B cell (primary cell): ENCODE measurements at regions of chr1 and their contacts with region 1.

Region 1: DNA sequence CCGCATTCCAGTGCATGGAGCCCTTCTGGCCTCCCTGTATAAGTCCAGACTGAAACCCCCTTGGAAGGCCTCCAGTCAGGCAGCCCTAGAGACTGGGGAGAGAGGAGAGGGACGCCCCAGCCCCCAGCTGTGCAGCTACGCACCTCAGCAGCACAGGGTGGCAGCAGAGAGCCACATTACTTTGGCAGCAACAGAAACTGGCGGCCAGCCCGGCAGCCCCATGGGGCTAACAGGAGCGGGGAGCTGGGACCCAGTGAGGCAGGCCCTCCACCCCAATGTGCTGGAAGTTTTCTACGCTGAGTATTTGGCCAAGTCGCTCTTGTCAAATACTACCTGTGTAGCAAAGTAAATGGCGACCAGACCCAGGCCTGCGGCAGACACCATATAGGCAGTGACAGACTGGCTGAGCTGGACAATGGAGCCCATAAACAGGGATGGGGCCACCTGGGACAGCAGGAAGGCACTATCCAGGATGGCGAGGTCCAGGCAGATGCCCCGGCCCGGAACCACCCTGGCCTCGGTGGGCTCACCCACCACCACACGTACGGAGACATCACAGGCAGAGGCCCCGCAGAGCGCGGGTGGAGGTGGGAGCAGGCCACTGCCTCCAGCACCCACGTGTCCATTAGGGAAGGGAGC is 21.2 kb downstream of the SLC45A3 start:
- DNase-seq: peak; percentile 87
- ATAC-seq: peak; percentile 93
- H3K4me3 ChIP-seq: no peak overlapping the region
- H3K4me3 Mint-ChIP-seq: peak overlapping the region; percentile 10
- H3K27ac ChIP-seq: peak overlapping the region in 1 of 2 donors; percentile 72
- H3K27ac Mint-ChIP-seq: peak overlapping the region; percentile 32
- H3K4me1 ChIP-seq: peaks cover 18 to 25% of the 10 kb centered on the region in 2 donors
- H3K4me1 Mint-ChIP-seq: peaks cover 22% of the 10 kb centered on the region
- H3K27me3 ChIP-seq: no peaks in the 10 kb centered on the region
- H3K27me3 Mint-ChIP-seq: no peaks in the 10 kb centered on the region
- CTCF ChIP-seq: peak; percentile 89

Region 2: DNA sequence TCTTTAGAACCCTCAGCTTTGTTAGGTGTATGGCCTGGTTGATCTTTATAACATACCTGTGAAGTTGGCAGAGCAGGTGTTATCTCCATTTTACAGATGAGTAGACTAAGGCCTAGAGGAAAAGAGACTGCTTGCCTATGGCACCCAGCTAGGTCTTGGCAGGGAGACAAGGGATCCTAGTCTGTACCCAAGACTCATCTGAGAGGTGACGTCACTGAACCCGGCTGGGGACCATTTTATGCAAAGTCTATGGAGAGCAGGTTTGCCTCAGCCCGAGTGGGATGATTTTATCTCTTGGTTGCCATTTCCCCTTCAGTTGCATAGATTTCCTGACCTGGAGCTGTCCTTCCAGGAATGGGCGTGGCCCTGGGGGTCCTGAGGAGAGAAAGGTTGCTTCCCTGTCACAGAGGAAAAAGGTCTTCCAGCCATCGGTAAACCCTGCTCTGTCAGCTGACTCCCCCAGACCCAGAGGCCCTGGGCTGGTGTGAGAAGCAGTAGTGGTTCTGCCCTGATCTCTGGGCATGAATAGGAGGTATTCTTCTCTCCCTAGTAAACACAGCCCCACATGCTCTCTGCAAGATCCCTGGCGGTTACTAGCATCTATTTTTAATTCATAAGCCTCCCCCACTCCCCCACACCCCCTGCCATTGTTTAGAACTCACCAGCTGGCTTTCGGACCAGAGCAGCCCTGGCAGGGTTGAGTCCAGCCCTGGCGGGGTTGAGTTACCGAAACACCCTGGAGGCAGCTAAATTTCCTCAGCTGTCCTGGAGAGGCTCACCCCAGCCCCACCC is 411.7 kb before region 1 on chr1:
- CTCF ChIA-PET with region 1: interaction called, 10 read pairs
- POLR2A ChIA-PET with region 1: no interaction called
- intact Hi-C with region 1: no loop called
- DNase-seq: no peak
- ATAC-seq: no peak
- H3K4me3 ChIP-seq: no peak overlapping the region
- H3K4me3 Mint-ChIP-seq: no peak overlapping the region
- H3K27ac ChIP-seq: no peak overlapping the region
- H3K27ac Mint-ChIP-seq: no peak overlapping the region
- H3K4me1 ChIP-seq: no peaks in the 10 kb centered on the region
- H3K4me1 Mint-ChIP-seq: no peaks in the 10 kb centered on the region
- H3K27me3 ChIP-seq: no peaks in the 10 kb centered on the region
- H3K27me3 Mint-ChIP-seq: no peaks in the 10 kb centered on the region
- CTCF ChIP-seq: no peak

Region 3: DNA sequence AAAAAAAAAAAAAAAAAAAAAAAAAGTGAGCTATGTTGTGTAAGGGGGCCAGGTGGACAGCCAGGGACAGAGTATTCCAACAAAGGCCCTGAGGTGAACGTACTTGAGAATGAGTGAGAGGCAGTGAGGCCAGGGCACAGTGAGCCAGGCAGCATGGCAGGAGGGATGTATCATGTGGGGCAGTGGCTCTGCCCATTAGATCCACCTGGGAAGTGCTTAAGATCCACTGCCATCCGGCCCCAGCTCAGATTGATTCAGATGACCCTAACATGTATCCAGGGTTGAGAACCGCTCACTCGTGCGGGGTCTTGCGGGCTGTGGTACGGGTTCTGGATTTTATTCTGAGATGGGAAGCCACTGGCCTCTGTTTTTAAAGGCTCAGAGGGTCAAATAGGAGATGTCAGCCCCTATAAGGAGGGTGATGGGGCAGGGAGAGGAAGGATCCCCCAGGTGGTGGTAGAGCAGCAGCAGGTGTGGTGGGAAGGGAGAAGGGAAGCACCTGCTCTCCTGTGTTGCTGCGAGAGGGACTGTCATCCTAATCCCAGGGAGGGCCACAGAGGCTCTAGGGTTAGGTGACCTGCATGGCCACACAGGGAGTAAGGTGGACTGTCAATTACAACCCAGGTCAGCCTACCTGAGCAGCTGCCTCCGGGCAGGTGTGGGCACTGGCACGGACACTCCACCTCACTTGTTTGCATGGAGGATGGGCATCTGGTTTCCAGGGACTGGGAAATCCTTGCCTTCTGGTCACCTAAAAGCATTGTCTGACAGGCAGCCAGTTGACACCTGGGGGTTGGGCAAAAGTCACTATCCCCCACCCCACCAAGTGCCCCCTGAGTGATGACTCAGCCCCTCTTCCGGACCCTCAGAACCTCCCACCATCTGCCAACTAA is 123.0 kb before region 1 on chr1:
- CTCF ChIA-PET with region 1: interaction called, 278 read pairs
- POLR2A ChIA-PET with region 1: no interaction called
- intact Hi-C with region 1: no loop called
- DNase-seq: no peak
- ATAC-seq: no peak
- H3K4me3 ChIP-seq: no peak overlapping the region
- H3K4me3 Mint-ChIP-seq: peak overlapping the region; percentile 61
- H3K27ac ChIP-seq: no peak overlapping the region
- H3K27ac Mint-ChIP-seq: no peak overlapping the region
- H3K4me1 ChIP-seq: peaks cover 0 to 5% of the 10 kb centered on the region in 2 donors
- H3K4me1 Mint-ChIP-seq: peaks cover 9% of the 10 kb centered on the region
- H3K27me3 ChIP-seq: no peaks in the 10 kb centered on the region
- H3K27me3 Mint-ChIP-seq: peaks cover 13% of the 10 kb centered on the region
- CTCF ChIP-seq: no peak

Region 4: DNA sequence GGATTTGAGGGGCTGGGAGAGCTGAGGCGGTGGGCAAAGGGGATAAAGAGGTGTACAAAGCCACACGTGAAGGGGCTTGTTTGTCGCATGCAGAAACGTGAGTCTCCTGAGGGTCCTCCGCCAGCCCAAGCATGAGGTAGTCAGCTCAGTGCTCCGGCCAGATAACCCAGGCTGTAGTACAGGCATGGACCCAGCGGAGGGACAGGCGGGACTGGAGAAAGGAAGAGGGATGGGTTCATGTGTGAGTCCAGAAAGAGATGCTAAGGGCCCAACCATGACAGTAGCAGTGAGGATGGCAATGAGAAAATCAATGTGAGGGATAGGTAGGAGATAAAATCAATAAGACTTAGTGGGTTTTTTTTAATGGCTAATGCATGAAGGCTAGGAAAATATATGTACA is 13.5 kb before region 1 on chr1:
- CTCF ChIA-PET with region 1: interaction called, 36 read pairs
- POLR2A ChIA-PET with region 1: interaction called, 3 read pairs
- intact Hi-C with region 1: no loop called
- DNase-seq: no peak
- ATAC-seq: no peak
- H3K4me3 ChIP-seq: no peak overlapping the region
- H3K4me3 Mint-ChIP-seq: no peak overlapping the region
- H3K27ac ChIP-seq: no peak overlapping the region
- H3K27ac Mint-ChIP-seq: no peak overlapping the region
- H3K4me1 ChIP-seq: no peaks in the 10 kb centered on the region
- H3K4me1 Mint-ChIP-seq: no peaks in the 10 kb centered on the region
- H3K27me3 ChIP-seq: no peaks in the 10 kb centered on the region
- H3K27me3 Mint-ChIP-seq: no peaks in the 10 kb centered on the region
- CTCF ChIP-seq: no peak

Region 5: DNA sequence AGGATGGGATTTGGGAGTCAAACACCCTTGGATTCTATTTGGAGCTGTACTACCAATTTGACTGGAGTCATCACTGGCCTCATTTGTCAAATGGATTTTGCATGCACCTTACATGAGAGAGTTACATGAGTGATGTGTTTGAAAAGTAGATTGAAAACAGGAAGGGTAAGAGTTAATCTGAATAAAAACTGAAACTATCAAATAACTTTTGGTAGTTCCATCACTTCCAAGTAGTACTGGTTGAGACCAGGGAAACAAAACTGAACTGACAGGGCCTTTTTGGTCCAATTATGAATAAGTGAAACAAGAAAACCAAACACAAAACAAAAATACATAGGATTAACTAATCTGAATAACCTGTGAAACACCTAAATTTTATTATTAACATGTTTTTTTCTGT is 60.7 kb after region 1 on chr1:
- CTCF ChIA-PET with region 1: interaction called, 943 read pairs
- POLR2A ChIA-PET with region 1: no interaction called
- intact Hi-C with region 1: no loop called
- DNase-seq: no peak
- ATAC-seq: no peak
- H3K4me3 ChIP-seq: no peak overlapping the region
- H3K4me3 Mint-ChIP-seq: no peak overlapping the region
- H3K27ac ChIP-seq: no peak overlapping the region
- H3K27ac Mint-ChIP-seq: no peak overlapping the region
- H3K4me1 ChIP-seq: no peaks in the 10 kb centered on the region
- H3K4me1 Mint-ChIP-seq: peaks cover 5% of the 10 kb centered on the region
- H3K27me3 ChIP-seq: no peaks in the 10 kb centered on the region
- H3K27me3 Mint-ChIP-seq: no peaks in the 10 kb centered on the region
- CTCF ChIP-seq: no peak

Region 6: DNA sequence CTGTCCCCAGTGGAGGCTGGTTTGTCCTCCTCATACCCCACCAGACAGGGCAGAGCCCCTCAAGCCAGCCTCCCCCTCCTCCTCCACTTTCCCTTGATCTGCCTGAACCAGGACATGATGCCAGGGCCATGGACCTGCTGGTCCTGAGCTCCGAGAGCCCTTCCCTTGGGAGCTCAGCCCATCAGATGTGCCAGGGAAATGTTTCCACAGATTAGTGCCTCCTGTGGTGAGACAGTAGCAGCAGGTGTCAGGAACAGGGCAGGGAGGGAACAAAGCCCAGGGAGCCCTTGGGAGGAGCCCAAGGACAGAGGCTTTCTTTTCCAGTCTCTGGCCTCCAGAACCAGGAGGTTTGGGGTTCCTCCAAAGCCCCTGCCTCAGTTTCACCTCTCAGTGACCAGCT is 168.6 kb after region 1 on chr1:
- CTCF ChIA-PET with region 1: interaction called, 15 read pairs
- POLR2A ChIA-PET with region 1: no interaction called
- intact Hi-C with region 1: no loop called
- DNase-seq: no peak
- ATAC-seq: no peak
- H3K4me3 ChIP-seq: no peak overlapping the region
- H3K4me3 Mint-ChIP-seq: no peak overlapping the region
- H3K27ac ChIP-seq: no peak overlapping the region
- H3K27ac Mint-ChIP-seq: no peak overlapping the region
- H3K4me1 ChIP-seq: peaks cover 0 to 35% of the 10 kb centered on the region in 2 donors
- H3K4me1 Mint-ChIP-seq: peaks cover 35% of the 10 kb centered on the region
- H3K27me3 ChIP-seq: no peaks in the 10 kb centered on the region
- H3K27me3 Mint-ChIP-seq: no peaks in the 10 kb centered on the region
- CTCF ChIP-seq: no peak